Transverse colon (tissue), 4 donors: ENCODE measurements at regions of chr7 and their contacts with region 1.

Region 1: DNA sequence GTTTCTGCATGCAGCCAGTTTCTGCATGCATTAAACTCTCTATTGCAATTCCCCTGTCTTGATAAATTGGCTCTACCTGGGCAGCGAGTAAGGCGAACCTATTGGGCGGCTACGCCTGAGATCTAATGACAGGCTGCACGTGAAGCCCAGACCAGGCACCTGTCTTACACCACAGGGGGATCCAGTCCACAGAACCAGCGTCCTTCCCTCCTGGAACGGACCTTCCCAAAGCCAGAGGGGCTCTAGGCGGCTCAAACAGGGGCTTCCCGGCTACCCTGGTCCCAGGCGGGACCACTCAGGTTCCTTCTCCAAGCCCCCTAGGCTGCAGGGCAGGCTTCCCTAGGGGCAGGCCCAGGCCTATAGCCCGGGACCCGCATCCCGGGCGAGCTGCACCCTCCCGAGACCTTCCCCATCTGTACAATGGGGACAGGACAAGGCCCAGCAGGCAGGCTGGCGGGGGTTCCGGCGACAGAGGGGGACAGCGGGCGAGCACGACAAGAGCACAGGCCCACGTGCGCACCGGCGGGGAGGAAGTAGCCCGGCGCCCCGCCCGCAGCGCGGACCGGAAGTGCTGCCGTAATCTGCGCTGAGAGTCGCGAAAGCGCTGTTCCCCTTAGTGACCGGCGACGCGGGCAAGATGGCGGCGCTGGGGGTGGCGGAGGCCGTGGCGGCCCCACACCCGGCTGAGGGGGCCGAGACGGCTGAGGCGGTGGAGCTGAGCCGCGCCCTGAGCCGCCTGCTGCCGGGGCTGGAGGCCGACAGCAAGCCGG is at the start of gene DNAAF5:
- DNase-seq: peak; percentile 89
- H3K4me3 ChIP-seq: peak within 1 kb of the TSS; percentile 74 to 99 (median 91)
- H3K27ac ChIP-seq: peak within 1 kb of the TSS; percentile 70 to 89 (median 80)
- H3K4me1 ChIP-seq: peaks cover 0 to 30% (median 15%) of the 10 kb centered on the region in 4 donors
- H3K27me3 ChIP-seq: no peaks in the 10 kb centered on the region
- CTCF ChIP-seq: no peak
- EP300 ChIP-seq: peak; percentile 7
- POLR2A ChIP-seq: no peak
- total RNA-seq, gene DNAAF5: 20.5 to 97.3 (median 34.6) TPM

Region 2: GRCh38 chr7:518630-519483 is 207.4 kb before region 1 on chr7:
- in situ Hi-C with region 1: no loop called
- intact Hi-C with region 1: loop called (anchors 10 kb)
- DNase-seq: peak; percentile 88
- H3K4me3 ChIP-seq: peak overlapping the region; percentile 77 to 90 (median 84)
- H3K27ac ChIP-seq: peak overlapping the region; percentile 95 to 98 (median 96)
- H3K4me1 ChIP-seq: peaks cover 38 to 67% (median 61%) of the 10 kb centered on the region in 4 donors
- H3K27me3 ChIP-seq: peaks cover 37% of the 10 kb centered on the region
- CTCF ChIP-seq: peak in 1 of 5 experiments; percentile 32
- EP300 ChIP-seq: no peak
- POLR2A ChIP-seq: peak; percentile 93

Region 3: DNA sequence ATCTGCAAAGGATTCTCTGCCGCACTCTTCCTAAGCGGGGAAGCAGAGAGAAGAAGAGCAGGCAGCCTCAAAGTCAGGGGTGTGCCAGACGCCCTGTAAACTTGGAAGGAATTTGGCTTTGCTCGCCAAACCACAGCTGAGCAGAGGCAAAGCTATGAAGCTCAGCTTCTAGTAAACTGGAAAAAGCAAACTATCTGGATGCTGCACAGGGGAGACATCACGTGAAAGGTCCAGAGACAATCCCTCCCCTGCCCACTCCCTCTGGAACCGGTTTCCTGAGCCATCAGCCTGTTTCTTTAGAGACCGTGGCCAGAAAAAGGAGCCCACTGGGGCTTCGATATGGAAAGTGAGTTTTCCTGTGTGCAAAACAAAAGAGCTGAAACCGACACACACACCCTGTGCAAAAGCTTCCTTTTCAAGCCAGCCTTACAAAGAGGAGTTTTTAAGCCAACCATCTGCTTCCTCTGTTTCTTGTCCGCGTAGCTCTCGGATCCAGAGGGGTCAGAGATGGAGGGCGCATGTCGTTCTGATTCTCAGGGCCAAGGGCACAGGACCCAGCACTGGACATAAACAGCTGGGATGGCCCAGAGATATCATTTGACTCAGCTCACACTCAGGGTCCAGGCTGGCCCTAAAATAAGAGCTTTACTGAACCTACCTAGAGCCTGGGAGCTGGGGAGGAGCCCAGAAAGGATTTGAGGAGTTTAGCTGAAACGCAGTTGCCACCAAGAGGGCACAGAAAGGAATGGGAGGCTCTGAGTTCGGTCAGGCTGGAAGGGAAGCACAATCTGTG is 57.9 kb before region 1 on chr7:
- in situ Hi-C with region 1: no loop called
- intact Hi-C with region 1: loop called (anchors 1 kb)
- DNase-seq: peak; percentile 31
- H3K4me3 ChIP-seq: no peak overlapping the region
- H3K27ac ChIP-seq: peak overlapping the region; percentile 74 to 81 (median 78)
- H3K4me1 ChIP-seq: peaks cover 7 to 34% (median 19%) of the 10 kb centered on the region in 4 donors
- H3K27me3 ChIP-seq: no peaks in the 10 kb centered on the region
- CTCF ChIP-seq: no peak
- EP300 ChIP-seq: no peak
- POLR2A ChIP-seq: no peak